ENCODE measurements at regions of chr14 and their contacts with region 1.

Region 1: DNA sequence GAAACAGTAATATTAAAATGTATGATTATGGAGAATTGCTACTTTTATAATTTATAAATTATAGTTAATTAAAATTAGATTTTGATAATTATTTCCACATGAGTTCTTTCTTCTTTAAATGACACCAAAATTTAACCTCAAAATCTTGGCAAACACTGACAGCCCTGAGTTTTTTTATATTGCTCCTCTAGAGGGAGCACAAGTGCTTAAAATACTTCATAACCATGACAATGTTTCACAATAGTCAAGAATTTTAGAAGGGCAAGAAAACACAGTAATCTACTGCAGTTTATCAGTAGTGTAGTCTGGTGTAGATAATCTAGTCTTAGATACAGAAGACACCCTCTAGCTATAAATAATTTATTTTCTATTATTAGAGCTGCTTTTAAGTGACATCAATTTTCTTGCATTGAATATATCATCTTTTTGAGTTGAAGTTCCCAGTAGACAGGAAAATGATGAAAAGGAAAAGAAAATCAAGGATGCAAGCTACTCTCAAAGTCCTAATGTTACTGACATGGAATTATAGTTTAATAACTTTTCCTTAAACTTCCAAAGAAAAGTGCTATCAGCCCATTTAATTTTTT is 14.3 kb upstream of the PTGER2 start:
- DNase-seq: no peak
- ATAC-seq: peak; percentile 73
- H3K4me3 ChIP-seq: no peak overlapping the region
- H3K27ac ChIP-seq: no peak overlapping the region
- H3K4me1 ChIP-seq: no peaks in the 10 kb centered on the region
- H3K27me3 ChIP-seq: no peaks in the 10 kb centered on the region
- CTCF ChIP-seq: peak; percentile 47 to 79 (median 61); a peak in 5 of 6 replicates
- EP300 ChIP-seq: no peak
- POLR2A ChIP-seq: no peak
- RAD21 ChIP-seq: peak; percentile 94

Region 2: DNA sequence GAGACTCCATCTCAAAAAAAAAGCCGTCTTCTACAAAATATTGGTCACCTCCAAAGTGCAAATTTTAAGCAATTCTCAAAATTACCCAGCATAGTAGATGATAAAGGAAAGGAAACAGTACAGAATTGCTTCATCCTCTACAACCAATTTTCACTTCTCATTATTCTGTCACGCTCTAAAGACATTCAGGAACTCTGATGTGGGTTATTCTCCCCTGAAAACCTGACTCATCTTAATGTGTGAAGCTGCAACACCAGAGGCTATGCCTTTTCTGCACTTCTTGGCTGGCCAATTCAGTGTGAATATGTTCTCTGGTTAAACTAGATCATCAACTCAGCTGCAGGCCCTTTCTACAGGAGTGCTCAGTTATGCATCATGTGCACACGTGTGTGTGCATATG is 25.3 kb after region 1 on chr14:
- CTCF ChIA-PET with region 1: interaction called, 10 read pairs
- POLR2A ChIA-PET with region 1: no interaction called
- RAD21 ChIA-PET with region 1: no interaction called
- SMC1A ChIA-PET with region 1: no interaction called
- in situ Hi-C with region 1: no loop called
- intact Hi-C with region 1: no loop called
- DNase-seq: peak; percentile 92
- ATAC-seq: peak; percentile 97
- H3K4me3 ChIP-seq: no peak overlapping the region
- H3K27ac ChIP-seq: no peak overlapping the region
- H3K4me1 ChIP-seq: peaks cover 27% of the 10 kb centered on the region
- H3K27me3 ChIP-seq: no peaks in the 10 kb centered on the region; a peak in 1 of 4 replicates
- CTCF ChIP-seq: no peak
- EP300 ChIP-seq: peak; percentile 41 to 83; a peak in 3 of 4 replicates
- POLR2A ChIP-seq: no peak
- RAD21 ChIP-seq: no peak

Region 3: DNA sequence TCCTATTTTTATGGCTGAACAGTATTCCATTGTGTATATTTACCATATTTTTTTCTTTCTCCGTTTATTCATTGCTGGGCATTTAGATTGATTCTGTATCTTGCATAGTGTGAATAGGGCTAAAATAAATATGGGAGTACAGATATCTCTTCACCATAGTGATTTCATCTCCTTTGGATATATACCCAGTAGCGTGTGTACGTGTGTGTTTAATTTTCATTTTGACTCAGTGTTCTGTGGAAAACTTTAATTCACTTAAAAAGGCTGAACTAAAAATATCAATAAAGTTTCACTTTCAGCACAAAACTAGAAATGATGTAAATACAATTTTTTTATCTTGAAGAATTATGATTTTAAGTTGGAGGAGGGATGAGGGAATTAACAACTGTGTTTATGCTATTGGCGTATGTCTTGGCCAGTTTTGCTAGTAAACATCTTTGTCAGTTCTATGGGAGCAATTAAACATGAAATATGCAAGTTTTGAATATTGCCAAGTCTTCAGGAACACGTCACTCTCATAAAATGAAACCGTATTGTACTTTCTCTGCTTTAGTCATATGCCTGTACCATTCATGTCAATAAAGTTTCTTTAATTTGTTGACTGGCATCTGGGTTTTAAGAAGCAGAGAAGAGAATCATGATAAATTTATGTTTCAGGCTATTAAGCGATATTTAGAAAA is 114.1 kb after region 1 on chr14:
- CTCF ChIA-PET with region 1: interaction called, 4 read pairs
- POLR2A ChIA-PET with region 1: no interaction called
- RAD21 ChIA-PET with region 1: interaction called, 3 read pairs
- SMC1A ChIA-PET with region 1: interaction called, 3 read pairs
- in situ Hi-C with region 1: no loop called
- intact Hi-C with region 1: loop called (anchors 5 kb)
- DNase-seq: no peak
- ATAC-seq: peak; percentile 70
- H3K4me3 ChIP-seq: no peak overlapping the region
- H3K27ac ChIP-seq: no peak overlapping the region
- H3K4me1 ChIP-seq: no peaks in the 10 kb centered on the region
- H3K27me3 ChIP-seq: no peaks in the 10 kb centered on the region
- CTCF ChIP-seq: no peak
- EP300 ChIP-seq: no peak; a peak in 1 of 4 replicates
- POLR2A ChIP-seq: no peak
- RAD21 ChIP-seq: no peak

Region 4: DNA sequence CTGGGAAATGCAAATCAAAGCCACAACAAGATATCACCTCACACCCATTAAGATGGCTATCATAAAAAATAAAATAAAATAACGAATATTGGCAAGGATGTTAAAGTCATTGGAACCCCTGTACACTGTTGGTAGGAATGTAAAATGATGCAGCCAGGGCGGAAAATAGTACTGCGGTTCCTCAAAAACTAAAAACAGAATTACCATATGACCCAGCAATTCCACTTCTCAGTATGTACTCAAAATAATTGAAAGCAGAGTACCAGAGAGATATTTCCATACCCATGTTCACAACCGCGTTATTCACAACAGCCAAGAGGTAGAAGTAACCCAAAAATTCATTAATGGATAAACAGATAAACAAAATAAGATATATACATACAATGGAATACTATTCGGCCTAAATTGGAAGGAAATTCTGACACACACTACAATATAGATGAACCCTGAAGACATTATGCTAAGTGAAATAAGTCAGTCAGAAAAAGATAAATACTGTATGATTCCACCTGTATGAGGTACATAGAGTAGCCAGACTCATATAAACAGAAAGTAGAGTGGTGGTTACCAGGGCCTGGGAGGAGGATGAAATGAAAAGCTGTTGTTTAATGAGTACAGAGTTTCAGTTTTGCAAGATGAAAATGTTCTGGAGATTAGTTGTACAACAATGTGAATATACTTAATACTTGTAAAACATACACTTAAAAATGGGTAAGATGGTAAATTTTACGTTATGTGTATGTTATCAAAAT is 167.9 kb after region 1 on chr14:
- CTCF ChIA-PET with region 1: interaction called, 17 read pairs
- POLR2A ChIA-PET with region 1: no interaction called
- RAD21 ChIA-PET with region 1: interaction called, 5 read pairs
- SMC1A ChIA-PET with region 1: interaction called, 5 read pairs
- in situ Hi-C with region 1: loop called (anchors 5 kb)
- intact Hi-C with region 1: no loop called
- DNase-seq: no peak
- ATAC-seq: peak; percentile 59
- H3K4me3 ChIP-seq: no peak overlapping the region
- H3K27ac ChIP-seq: no peak overlapping the region
- H3K4me1 ChIP-seq: no peaks in the 10 kb centered on the region
- H3K27me3 ChIP-seq: no peaks in the 10 kb centered on the region
- CTCF ChIP-seq: no peak
- EP300 ChIP-seq: no peak
- POLR2A ChIP-seq: no peak
- RAD21 ChIP-seq: no peak

Region 5: DNA sequence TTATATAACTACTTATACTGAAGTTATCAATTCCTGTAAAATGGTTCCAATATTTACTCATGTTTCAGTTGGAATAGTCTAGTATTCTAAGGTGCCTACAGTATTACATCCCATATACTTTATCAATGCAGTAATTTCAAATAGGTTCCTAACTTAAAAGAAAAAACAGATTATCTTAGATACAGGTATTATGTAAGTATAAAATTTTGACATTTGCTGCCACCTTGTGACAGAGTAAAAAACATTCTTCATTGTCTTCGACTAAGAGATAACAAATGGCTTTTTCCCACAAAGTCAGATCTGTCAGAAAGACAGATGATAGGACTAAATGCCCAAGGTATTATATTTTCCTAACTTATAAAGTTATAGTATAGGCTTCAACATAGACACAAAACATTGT is 173.8 kb after region 1 on chr14:
- CTCF ChIA-PET with region 1: interaction called, 17 read pairs
- POLR2A ChIA-PET with region 1: no interaction called
- RAD21 ChIA-PET with region 1: interaction called, 5 read pairs
- SMC1A ChIA-PET with region 1: interaction called, 5 read pairs
- in situ Hi-C with region 1: loop called (anchors 5 kb)
- intact Hi-C with region 1: loop called (anchors 1 kb)
- DNase-seq: no peak
- ATAC-seq: peak; percentile 30; the same call in 1 of the 3 replicates
- H3K4me3 ChIP-seq: no peak overlapping the region
- H3K27ac ChIP-seq: no peak overlapping the region
- H3K4me1 ChIP-seq: no peaks in the 10 kb centered on the region
- H3K27me3 ChIP-seq: no peaks in the 10 kb centered on the region
- CTCF ChIP-seq: peak; percentile 18 to 43 (median 22); a peak in 2 of 6 replicates
- EP300 ChIP-seq: no peak
- POLR2A ChIP-seq: no peak
- RAD21 ChIP-seq: peak; percentile 42

Region 6: DNA sequence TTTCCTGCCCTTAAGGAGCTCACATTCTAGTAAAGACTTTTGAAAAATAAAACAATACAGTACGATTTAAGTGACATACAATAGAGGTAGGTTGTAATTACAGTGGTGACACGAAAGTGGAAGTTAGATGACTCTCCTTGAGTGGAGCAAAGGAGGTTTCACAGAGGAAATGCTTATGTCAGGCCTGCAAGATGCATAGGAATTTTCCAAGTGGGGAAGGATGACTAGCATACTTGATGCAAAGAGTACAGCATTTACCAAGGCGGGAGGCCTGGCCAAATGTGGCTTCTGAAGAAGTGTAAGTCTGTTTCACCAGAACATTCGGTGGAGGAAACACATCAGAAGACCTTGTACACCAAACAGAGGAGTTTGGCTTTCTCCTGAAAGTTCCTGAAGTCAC is 340.4 kb after region 1 on chr14:
- CTCF ChIA-PET with region 1: no interaction called
- POLR2A ChIA-PET with region 1: no interaction called
- RAD21 ChIA-PET with region 1: no interaction called
- SMC1A ChIA-PET with region 1: no interaction called
- in situ Hi-C with region 1: no loop called
- intact Hi-C with region 1: loop called (anchors 10 kb)
- DNase-seq: no peak
- ATAC-seq: no peak
- H3K4me3 ChIP-seq: no peak overlapping the region
- H3K27ac ChIP-seq: no peak overlapping the region
- H3K4me1 ChIP-seq: no peaks in the 10 kb centered on the region
- H3K27me3 ChIP-seq: no peaks in the 10 kb centered on the region
- CTCF ChIP-seq: no peak
- EP300 ChIP-seq: no peak
- POLR2A ChIP-seq: no peak
- RAD21 ChIP-seq: no peak